ENCODE measurements at regions of chr3 and their contacts with region 1.

Region 1: GRCh38 chr3:142993958-142994442 is 7.4 kb upstream of the U2SURP start:
- DNase-seq: peak; percentile 46 to 62
- H3K4me3 ChIP-seq: no peak overlapping the region
- H3K4me3 Mint-ChIP-seq: no peak overlapping the region
- H3K27ac Mint-ChIP-seq: no peak overlapping the region
- H3K4me1 ChIP-seq: no peaks in the 10 kb centered on the region
- H3K4me1 Mint-ChIP-seq: no peaks in the 10 kb centered on the region
- H3K27me3 ChIP-seq: no peaks in the 10 kb centered on the region
- H3K27me3 Mint-ChIP-seq: peaks cover 3% of the 10 kb centered on the region
- CTCF ChIP-seq: peak; percentile 65 to 68

Region 2: GRCh38 chr3:142501004-142501926 is 492.7 kb before region 1 on chr3:
- CTCF ChIA-PET with region 1: no interaction called
- POLR2A ChIA-PET with region 1: no interaction called
- intact Hi-C with region 1: no loop called
- DNase-seq: no peak
- H3K4me3 ChIP-seq: no peak overlapping the region
- H3K4me3 Mint-ChIP-seq: no peak overlapping the region
- H3K27ac Mint-ChIP-seq: no peak overlapping the region
- H3K4me1 ChIP-seq: no peaks in the 10 kb centered on the region; the same call in 1 of the 2 replicates
- H3K4me1 Mint-ChIP-seq: no peaks in the 10 kb centered on the region
- H3K27me3 ChIP-seq: no peaks in the 10 kb centered on the region
- H3K27me3 Mint-ChIP-seq: no peaks in the 10 kb centered on the region
- CTCF ChIP-seq: no peak

Region 3: GRCh38 chr3:142844339-142844977 is 149.5 kb before region 1 on chr3:
- CTCF ChIA-PET with region 1: no interaction called
- POLR2A ChIA-PET with region 1: no interaction called
- intact Hi-C with region 1: loop called (anchors 1 kb)
- DNase-seq: peak in 1 of 2 experiments; percentile 24
- H3K4me3 ChIP-seq: no peak overlapping the region
- H3K4me3 Mint-ChIP-seq: no peak overlapping the region
- H3K27ac Mint-ChIP-seq: no peak overlapping the region
- H3K4me1 ChIP-seq: no peaks in the 10 kb centered on the region
- H3K4me1 Mint-ChIP-seq: no peaks in the 10 kb centered on the region
- H3K27me3 ChIP-seq: no peaks in the 10 kb centered on the region
- H3K27me3 Mint-ChIP-seq: peaks cover 3% of the 10 kb centered on the region
- CTCF ChIP-seq: peak; percentile 45 to 65

Region 4: GRCh38 chr3:142929109-142929508 is 64.9 kb before region 1 on chr3:
- CTCF ChIA-PET with region 1: no interaction called
- POLR2A ChIA-PET with region 1: no interaction called
- intact Hi-C with region 1: loop called (anchors 1 kb)
- DNase-seq: peak; percentile 61 to 62
- H3K4me3 ChIP-seq: no peak overlapping the region
- H3K4me3 Mint-ChIP-seq: no peak overlapping the region
- H3K27ac Mint-ChIP-seq: no peak overlapping the region
- H3K4me1 ChIP-seq: no peaks in the 10 kb centered on the region
- H3K4me1 Mint-ChIP-seq: no peaks in the 10 kb centered on the region
- H3K27me3 ChIP-seq: no peaks in the 10 kb centered on the region; the same call in none of the 2 replicates
- H3K27me3 Mint-ChIP-seq: peaks cover 8% of the 10 kb centered on the region
- CTCF ChIP-seq: peak; percentile 45 to 54

Measured in Caco-2 (cell line).